Dorsolateral prefrontal cortex (tissue), 120 donors: ENCODE measurements at regions of chrX and their contacts with region 1.

Region 1: DNA sequence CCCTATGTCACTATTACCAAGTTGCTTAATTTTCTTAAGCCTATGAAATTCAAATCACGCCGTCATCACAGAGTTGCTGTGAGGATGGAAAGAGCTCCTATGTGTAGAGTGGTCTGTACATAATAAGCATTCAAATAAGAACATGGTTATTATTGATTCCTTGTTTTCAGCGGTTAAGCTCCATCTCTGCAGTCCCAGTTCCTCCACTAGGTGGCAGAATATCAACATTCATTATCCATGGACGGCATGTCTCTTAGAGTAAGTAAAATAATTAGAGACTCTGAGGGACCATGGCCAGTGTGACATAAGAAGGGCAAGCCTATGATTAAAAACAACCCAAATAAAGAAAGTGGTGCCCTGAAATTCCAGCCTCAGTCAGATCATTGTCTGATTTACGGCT is 132.5 kb upstream of the NHS start:
- DNase-seq: peak in 2 of 10 donors; percentile 34 to 41
- H3K4me3 ChIP-seq: no peak overlapping the region
- H3K27ac ChIP-seq: no peak overlapping the region
- H3K27me3 ChIP-seq: peaks cover 0 to 69% (median 19%) of the 10 kb centered on the region in 45 donors
- CTCF ChIP-seq: peak; percentile 58 to 86 (median 76)

Region 2: DNA sequence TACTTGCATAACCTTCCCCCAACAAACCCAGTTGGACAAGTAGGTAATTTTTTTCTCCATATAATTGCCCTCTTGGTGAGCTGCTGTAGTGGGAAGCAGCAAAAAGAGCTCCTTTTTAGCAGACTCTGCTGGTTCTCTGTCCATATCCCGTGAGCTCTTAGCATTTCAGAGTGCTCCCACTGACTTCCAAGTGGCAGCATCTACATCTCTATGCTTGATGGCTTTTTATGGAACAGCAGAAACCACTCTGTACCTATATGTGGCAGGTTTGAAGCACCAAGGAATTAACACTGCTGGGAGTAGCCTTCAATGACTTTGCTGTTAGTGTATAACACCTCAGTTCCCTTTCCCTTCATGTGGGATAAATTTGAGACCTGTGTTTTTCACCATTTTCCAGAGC is 35.9 kb before region 1 on chrX:
- intact Hi-C with region 1: no loop called
- DNase-seq: no peak
- H3K4me3 ChIP-seq: no peak overlapping the region
- H3K27ac ChIP-seq: no peak overlapping the region
- H3K27me3 ChIP-seq: peaks cover 0 to 64% (median 9%) of the 10 kb centered on the region in 45 donors
- CTCF ChIP-seq: no peak

Region 3: GRCh38 chrX:17278961-17279360 is 36.5 kb after region 1 on chrX:
- intact Hi-C with region 1: no loop called
- DNase-seq: no peak
- H3K4me3 ChIP-seq: no peak overlapping the region
- H3K27ac ChIP-seq: no peak overlapping the region
- H3K27me3 ChIP-seq: peaks cover 0 to 76% (median 17%) of the 10 kb centered on the region in 45 donors
- CTCF ChIP-seq: no peak

Region 4: DNA sequence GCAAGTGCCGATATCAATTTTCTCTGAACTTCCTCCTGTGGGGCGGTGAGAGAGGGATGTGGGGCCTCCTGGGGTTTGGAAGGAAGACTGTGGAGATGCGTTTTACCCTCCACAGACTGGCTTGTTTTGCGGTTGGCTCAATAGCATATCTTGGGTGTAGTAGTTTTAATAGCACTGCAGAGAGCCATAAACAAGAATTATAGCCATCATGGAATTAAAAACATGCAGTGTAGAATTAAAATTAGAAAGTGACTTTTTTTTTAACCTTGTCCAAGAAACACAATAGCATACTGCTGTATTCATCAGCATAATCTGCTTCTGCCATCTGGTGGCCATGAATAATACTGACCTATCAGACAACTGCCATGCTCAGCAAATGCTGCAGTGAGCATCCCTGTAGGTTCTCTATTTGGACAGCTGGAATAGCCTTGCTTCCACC is 447.5 kb after region 1 on chrX:
- intact Hi-C with region 1: loop called in 1 of 2 experiments (anchors 5 kb)
- DNase-seq: peak in 5 of 10 donors; percentile 21 to 63 (median 43)
- H3K4me3 ChIP-seq: no peak overlapping the region
- H3K27ac ChIP-seq: no peak overlapping the region
- H3K27me3 ChIP-seq: peaks cover 0 to 89% (median 18%) of the 10 kb centered on the region in 45 donors
- CTCF ChIP-seq: peak; percentile 28 to 88 (median 78)